Activated B cell treated with CpG ODN at 0.5 μM for 24 hours (primary cell): ENCODE measurements at regions of chr7 and their contacts with region 1.

Region 1: GRCh38 chr7:148262721-148263229 is 327.8 kb upstream of the C7orf33 start:
- DNase-seq: peak; percentile 60
- ATAC-seq: peak; percentile 88
- H3K4me3 Mint-ChIP-seq: peak overlapping the region; percentile 69
- H3K27ac Mint-ChIP-seq: no peak overlapping the region
- H3K4me1 Mint-ChIP-seq: peaks cover 27% of the 10 kb centered on the region
- H3K27me3 Mint-ChIP-seq: peaks cover 5% of the 10 kb centered on the region
- CTCF ChIP-seq: peak; percentile 94

Region 2: GRCh38 chr7:148050492-148051158 is 212.2 kb before region 1 on chr7:
- CTCF ChIA-PET with region 1: no interaction called
- POLR2A ChIA-PET with region 1: no interaction called
- intact Hi-C with region 1: no loop called
- DNase-seq: no peak
- ATAC-seq: no peak
- H3K4me3 Mint-ChIP-seq: no peak overlapping the region
- H3K27ac Mint-ChIP-seq: no peak overlapping the region
- H3K4me1 Mint-ChIP-seq: no peaks in the 10 kb centered on the region
- H3K27me3 Mint-ChIP-seq: no peaks in the 10 kb centered on the region
- CTCF ChIP-seq: no peak

Region 3: DNA sequence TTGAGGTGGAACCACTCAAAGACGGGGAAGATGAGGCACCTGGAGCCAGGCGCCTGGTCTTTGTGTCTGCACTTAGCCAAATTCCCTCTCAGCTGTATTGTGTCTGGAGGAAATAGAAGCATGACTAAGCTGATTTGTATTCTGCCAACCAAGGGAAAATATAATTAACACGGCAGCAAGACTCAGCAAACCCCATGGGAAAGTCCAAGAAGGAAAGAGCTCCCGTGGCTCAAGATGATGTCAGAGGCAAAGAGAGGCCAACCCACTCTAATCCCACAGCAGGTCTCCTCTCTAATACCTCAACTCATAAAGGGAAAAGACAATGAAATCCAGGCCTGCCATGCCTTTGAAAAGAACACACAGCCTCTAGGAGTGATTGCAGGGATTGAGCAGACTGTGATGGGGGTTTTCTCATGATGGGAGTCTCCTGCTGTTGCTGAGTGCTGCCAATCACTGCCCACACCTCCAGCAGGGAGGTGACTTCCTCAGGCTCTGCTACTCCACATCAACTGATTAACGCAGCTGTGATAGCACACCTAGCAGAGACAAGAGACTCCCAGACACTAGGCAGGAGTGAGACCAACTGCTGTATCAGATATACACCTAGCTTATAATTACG is 72.3 kb after region 1 on chr7:
- CTCF ChIA-PET with region 1: interaction called, 4 read pairs
- POLR2A ChIA-PET with region 1: no interaction called
- intact Hi-C with region 1: loop called (anchors 2 kb)
- DNase-seq: no peak
- ATAC-seq: no peak
- H3K4me3 Mint-ChIP-seq: no peak overlapping the region
- H3K27ac Mint-ChIP-seq: no peak overlapping the region
- H3K4me1 Mint-ChIP-seq: peaks cover 17% of the 10 kb centered on the region
- H3K27me3 Mint-ChIP-seq: peaks cover 13% of the 10 kb centered on the region
- CTCF ChIP-seq: no peak

Region 4: GRCh38 chr7:148485618-148486017 is 222.8 kb after region 1 on chr7:
- CTCF ChIA-PET with region 1: interaction called, 26 read pairs
- POLR2A ChIA-PET with region 1: no interaction called
- intact Hi-C with region 1: loop called (anchors 1 kb)
- DNase-seq: no peak
- ATAC-seq: no peak
- H3K4me3 Mint-ChIP-seq: no peak overlapping the region
- H3K27ac Mint-ChIP-seq: no peak overlapping the region
- H3K4me1 Mint-ChIP-seq: peaks cover 18% of the 10 kb centered on the region
- H3K27me3 Mint-ChIP-seq: peaks cover 6% of the 10 kb centered on the region
- CTCF ChIP-seq: no peak

Region 5: DNA sequence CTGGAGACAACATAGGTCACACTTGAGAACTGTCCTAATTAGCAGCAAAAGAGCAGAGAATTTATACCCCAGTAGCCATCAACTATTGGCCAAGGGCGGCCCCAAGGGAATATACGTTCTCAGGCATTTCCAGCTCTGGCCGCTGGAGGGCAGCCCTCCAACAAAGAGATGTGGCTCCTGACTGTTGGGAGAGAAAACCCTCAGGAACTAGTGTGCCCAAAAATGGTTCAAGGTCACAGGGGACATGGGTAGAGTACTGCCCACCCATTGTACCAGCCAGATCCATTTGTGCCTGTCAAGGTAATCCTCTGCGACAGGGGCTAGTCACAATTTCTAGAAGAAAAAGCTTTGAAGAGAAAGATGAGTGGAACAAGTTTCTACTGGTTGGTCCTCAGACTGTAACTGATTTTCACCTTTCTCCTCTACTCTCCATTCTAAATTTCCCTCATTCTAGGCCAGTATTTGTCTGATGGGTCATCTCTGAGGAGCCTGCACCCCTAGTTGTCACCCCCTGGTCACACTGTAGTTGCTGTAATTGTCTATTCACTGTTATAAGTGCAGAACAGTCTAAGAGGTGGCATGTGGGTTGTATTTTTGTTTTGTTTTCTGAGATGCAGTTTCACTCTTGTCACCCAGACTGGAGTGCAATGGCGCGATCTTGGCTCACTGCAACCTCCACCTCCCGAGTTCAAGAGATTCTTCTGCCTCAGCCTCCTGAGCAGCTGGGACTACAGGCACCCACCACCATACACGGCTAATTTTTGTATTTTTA is 313.1 kb after region 1 on chr7:
- CTCF ChIA-PET with region 1: interaction called, 4 read pairs
- POLR2A ChIA-PET with region 1: no interaction called
- intact Hi-C with region 1: loop called (anchors 2 kb)
- DNase-seq: peak; percentile 56
- ATAC-seq: peak; percentile 88
- H3K4me3 Mint-ChIP-seq: no peak overlapping the region
- H3K27ac Mint-ChIP-seq: no peak overlapping the region
- H3K4me1 Mint-ChIP-seq: peaks cover 2% of the 10 kb centered on the region
- H3K27me3 Mint-ChIP-seq: peaks cover 2% of the 10 kb centered on the region
- CTCF ChIP-seq: no peak

Region 6: GRCh38 chr7:149071641-149072437 is 809.1 kb after region 1 on chr7:
- CTCF ChIA-PET with region 1: no interaction called
- POLR2A ChIA-PET with region 1: no interaction called
- intact Hi-C with region 1: loop called (anchors 5 kb)
- DNase-seq: no peak
- ATAC-seq: peak; percentile 45
- H3K4me3 Mint-ChIP-seq: no peak overlapping the region
- H3K27ac Mint-ChIP-seq: no peak overlapping the region
- H3K4me1 Mint-ChIP-seq: peaks cover 4% of the 10 kb centered on the region
- H3K27me3 Mint-ChIP-seq: no peaks in the 10 kb centered on the region
- CTCF ChIP-seq: no peak